ENCODE measurements at regions of chr4 and their contacts with region 1.

Region 1: DNA sequence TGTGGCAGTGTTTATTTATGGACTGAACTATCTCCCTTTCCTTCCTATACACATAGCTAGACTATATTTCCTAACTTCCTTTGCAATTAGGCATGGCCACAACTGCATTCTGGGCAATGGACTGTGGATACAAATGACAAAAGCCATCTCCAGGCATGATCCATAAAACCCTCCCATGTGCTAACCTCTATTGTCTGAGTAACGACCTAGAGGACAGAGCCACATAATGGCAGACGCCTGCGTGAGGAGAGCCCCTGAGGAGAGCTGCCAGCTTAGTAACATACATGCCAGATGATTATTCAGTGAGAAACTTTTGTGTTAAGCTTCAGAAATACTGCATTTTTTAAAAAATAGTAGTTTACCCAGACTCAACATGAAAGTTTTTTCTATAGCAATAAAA is 142.9 kb downstream of the ADGRA3 start:
- DNase-seq: no peak
- H3K4me3 ChIP-seq: no peak overlapping the region
- H3K27ac ChIP-seq: no peak overlapping the region
- H3K4me1 ChIP-seq: no peaks in the 10 kb centered on the region
- H3K27me3 ChIP-seq: no peaks in the 10 kb centered on the region
- CTCF ChIP-seq: no peak
- EP300 ChIP-seq: no peak
- RAD21 ChIP-seq: no peak

Region 2: DNA sequence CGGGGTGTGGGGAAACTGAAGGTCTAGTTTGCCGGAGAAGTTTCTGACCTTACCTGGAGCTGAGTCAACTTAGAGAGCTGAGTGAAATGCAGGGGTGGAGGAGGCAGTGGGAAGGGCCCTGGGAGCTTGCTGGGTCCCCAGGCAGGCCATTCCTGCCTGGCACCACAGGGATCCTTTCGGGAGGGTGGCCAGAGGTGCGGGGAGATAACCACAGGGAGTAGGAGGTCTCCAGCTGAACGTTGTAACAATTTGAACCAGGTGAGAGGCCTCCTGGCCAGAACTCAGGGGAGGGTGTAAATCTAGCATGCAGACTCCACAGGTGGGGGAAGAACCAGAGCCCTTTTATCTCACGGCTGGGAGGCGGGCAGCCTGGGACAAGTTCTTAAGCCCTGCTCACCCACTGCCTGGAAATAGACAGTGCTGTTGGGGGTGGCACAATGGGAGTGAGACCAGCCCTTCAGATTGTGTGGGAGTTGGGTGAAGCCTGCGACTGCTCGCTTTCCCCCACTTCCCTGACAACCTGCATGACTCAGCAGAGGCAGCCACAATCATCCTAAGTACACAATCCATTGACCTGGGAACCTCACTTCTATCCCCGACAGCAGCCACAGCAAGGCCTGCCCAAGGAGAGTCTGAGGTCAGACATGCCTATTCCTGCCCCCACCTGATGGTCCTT is 104.5 kb before region 1 on chr4:
- CTCF ChIA-PET with region 1: no interaction called
- POLR2A ChIA-PET with region 1: no interaction called
- DNase-seq: no peak
- H3K4me3 ChIP-seq: no peak overlapping the region
- H3K27ac ChIP-seq: no peak overlapping the region
- H3K4me1 ChIP-seq: no peaks in the 10 kb centered on the region
- H3K27me3 ChIP-seq: no peaks in the 10 kb centered on the region; the same call in 1 of the 2 replicates
- CTCF ChIP-seq: no peak
- EP300 ChIP-seq: no peak
- RAD21 ChIP-seq: no peak

Region 3: DNA sequence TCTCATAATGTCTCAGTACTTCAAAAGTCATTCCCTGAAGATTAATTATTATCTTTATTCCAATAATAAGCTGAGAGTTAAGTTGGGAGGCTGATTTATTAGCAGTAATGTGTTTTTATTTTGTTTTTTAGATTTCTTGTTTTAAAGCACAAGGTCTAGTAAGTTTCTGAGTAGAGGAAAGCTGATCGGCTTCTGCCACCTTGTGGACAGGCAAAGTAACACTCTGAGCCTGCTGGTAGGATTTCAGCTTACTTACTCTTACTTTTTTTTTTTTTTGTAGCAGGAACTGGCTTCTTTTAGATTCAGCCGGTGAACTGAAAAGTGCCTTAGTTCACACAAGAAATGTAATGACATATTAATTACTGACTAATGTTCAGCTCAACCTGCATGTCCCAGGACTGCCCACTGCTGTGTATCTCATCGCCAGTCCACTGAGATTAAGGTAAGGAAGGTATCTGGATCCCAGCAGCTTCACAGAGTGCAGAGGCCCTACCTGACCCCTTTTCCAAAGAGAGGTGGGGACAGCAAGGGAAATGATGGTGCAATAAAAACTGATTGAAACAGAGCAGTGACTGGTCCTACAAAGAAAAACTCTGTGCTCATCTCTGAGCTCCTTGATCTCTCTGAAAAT is 16.4 kb after region 1 on chr4:
- CTCF ChIA-PET with region 1: interaction called, 19 read pairs
- POLR2A ChIA-PET with region 1: interaction called, 4 read pairs
- DNase-seq: peak; percentile 35
- H3K4me3 ChIP-seq: no peak overlapping the region; a peak in 1 of 4 replicates
- H3K27ac ChIP-seq: no peak overlapping the region
- H3K4me1 ChIP-seq: no peaks in the 10 kb centered on the region
- H3K27me3 ChIP-seq: no peaks in the 10 kb centered on the region
- CTCF ChIP-seq: peak; percentile 95
- EP300 ChIP-seq: no peak
- RAD21 ChIP-seq: peak; percentile 88

Measured in SK-N-SH (cell line).